CD8-positive, alpha-beta T cell (primary cell): ENCODE measurements at regions of chr17 and their contacts with region 1.

Region 1: GRCh38 chr17:40168262-40168832 is 8.9 kb upstream of the RAPGEFL1 start:
- DNase-seq: peak in 7 of 9 experiments; percentile 6 to 83 (median 47)
- ATAC-seq: peak; percentile 92
- H3K4me3 ChIP-seq: no peak overlapping the region
- H3K4me3 Mint-ChIP-seq: no peak overlapping the region
- H3K27ac ChIP-seq: no peak overlapping the region
- H3K27ac Mint-ChIP-seq: peak overlapping the region; percentile 80
- H3K4me1 ChIP-seq: peaks cover 4% of the 10 kb centered on the region
- H3K4me1 Mint-ChIP-seq: peaks cover 9% of the 10 kb centered on the region
- H3K27me3 ChIP-seq: no peaks in the 10 kb centered on the region
- H3K27me3 Mint-ChIP-seq: no peaks in the 10 kb centered on the region
- CTCF ChIP-seq: peak; percentile 79

Region 2: DNA sequence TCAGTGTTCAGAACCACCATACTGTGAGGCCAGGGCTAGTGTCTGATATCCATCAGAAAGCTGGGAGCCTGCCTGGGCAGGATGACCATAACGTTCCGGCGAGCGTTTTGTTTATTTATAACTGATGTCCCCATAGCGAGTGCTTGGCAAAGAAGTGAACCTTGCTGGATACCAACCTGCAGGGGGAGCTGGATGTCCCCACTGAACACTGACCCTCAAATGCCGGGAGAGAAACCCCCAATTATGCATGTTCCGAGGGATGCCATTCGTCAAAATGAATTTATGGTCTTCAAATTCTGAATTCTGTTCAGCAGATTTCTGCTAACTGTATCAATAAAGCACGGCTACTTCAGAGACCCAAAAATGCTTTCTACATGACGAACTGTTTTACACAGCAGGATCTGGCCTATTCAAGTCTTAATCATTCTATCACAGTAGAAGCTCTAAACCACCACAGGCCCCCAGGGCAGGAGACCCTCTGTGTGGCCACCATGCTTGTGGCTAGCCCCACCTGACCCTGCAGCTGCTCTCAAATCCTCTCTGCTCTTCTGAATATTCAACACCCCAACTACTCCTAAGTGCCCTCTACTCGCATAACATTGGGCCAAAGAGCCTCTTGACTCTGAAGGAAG is 129.3 kb before region 1 on chr17:
- CTCF ChIA-PET with region 1: interaction called, 5 read pairs
- POLR2A ChIA-PET with region 1: no interaction called
- intact Hi-C with region 1: loop called in 1 of 2 experiments (anchors 1 kb)
- DNase-seq: peak in 2 of 9 experiments; percentile 31 to 44
- ATAC-seq: no peak
- H3K4me3 ChIP-seq: no peak overlapping the region
- H3K4me3 Mint-ChIP-seq: no peak overlapping the region
- H3K27ac ChIP-seq: no peak overlapping the region
- H3K27ac Mint-ChIP-seq: no peak overlapping the region
- H3K4me1 ChIP-seq: no peaks in the 10 kb centered on the region
- H3K4me1 Mint-ChIP-seq: peaks cover 3% of the 10 kb centered on the region
- H3K27me3 ChIP-seq: no peaks in the 10 kb centered on the region
- H3K27me3 Mint-ChIP-seq: no peaks in the 10 kb centered on the region
- CTCF ChIP-seq: peak; percentile 30

Region 3: DNA sequence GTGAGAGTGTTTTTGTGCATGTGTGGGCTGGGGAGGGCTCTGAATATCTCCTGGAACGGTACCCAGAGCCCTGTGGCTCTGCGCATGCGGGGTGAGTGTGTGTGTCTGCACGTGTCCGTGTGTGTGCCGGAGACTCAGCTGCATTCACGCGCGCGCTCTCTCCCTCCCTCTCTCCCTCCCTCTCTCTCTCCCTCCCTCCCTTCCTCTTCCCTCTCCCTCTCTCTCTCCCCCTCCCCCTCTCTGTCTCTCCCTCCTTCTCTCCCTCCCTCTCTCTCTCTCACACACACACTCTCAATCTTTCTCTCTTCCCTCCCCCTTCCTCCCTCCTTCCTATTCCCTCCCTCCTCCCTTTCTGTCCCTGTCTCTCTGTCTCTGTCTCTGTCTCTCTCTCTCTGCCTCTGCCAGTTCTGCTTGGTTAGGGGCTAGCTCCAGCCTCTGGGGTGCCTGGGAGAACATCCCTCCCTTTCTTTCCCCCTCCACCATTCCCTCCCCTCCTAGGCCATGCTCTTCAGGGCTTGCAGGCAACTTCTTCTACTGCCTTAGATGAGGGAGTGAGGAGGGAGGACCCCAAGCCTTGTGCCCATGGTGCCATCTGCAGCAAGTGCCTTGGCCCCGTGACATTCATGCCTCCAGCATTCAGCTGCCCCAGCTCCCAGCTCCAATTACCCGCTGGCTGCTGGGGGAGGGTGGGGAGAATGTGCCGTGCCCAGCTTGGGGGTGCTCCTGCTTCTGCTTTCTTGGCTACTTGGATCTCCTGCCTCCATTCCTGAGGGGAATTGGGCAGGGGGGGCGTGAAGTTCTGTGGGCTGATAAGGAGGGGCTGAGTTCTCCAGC is 99.2 kb before region 1 on chr17:
- CTCF ChIA-PET with region 1: interaction called, 19 read pairs
- POLR2A ChIA-PET with region 1: interaction called, 4 read pairs
- intact Hi-C with region 1: loop called in 1 of 2 experiments (anchors 5 kb)
- DNase-seq: peak; percentile 55 to 89 (median 80)
- ATAC-seq: peak; percentile 63
- H3K4me3 ChIP-seq: peak overlapping the region; percentile 40 to 42
- H3K4me3 Mint-ChIP-seq: peak overlapping the region; percentile 84
- H3K27ac ChIP-seq: peak overlapping the region; percentile 18 to 75
- H3K27ac Mint-ChIP-seq: peak overlapping the region; percentile 96
- H3K4me1 ChIP-seq: peaks cover 89% of the 10 kb centered on the region
- H3K4me1 Mint-ChIP-seq: peaks cover 87% of the 10 kb centered on the region
- H3K27me3 ChIP-seq: no peaks in the 10 kb centered on the region
- H3K27me3 Mint-ChIP-seq: no peaks in the 10 kb centered on the region
- CTCF ChIP-seq: peak; percentile 41

Region 4: DNA sequence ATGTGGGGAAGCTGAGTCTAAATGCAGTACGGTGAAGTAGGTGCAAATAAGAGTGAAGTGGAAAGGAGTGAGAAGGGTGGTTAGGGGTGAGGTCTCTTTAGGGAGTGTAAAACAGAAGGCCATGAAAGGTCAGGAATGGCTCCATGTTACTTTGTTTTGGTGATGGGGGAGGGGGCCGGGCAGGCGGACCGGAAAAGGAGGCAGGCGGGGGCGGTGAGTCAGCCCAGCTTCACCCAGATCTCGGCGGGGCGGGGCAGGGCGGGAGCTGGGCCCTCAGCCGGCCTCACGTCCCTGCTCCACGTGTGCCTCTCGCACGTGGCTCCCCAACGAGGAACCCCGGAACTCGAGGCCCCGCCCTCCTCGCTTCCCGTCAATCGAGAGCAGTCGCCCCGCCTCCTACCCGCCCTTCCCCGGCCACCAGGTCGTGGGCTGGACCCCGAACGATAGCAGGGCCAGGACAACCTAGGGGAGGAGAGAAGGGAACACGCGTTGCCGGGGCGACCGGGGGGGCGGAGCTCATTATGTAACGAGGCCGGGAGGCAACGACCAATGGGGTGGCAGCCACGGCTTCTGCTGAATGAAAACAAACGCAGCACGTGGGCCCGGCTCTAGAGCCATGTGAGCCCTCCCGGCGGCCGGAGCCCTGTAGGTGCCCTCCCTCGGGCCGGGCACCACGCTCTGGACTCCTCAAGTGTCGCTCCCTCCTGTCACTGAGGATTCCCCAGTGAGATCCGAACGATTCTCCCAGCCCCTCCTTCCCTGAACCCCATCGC is 69.3 kb before region 1 on chr17:
- CTCF ChIA-PET with region 1: interaction called, 11 read pairs
- POLR2A ChIA-PET with region 1: interaction called, 5 read pairs
- intact Hi-C with region 1: no loop called
- DNase-seq: peak; percentile 97 to 100 (median 99)
- ATAC-seq: peak; percentile 64
- H3K4me3 ChIP-seq: peak overlapping the region; percentile 75 to 90
- H3K4me3 Mint-ChIP-seq: peak overlapping the region; percentile 94
- H3K27ac ChIP-seq: peak overlapping the region; percentile 79 to 98
- H3K27ac Mint-ChIP-seq: peak overlapping the region; percentile 95
- H3K4me1 ChIP-seq: peaks cover 80% of the 10 kb centered on the region
- H3K4me1 Mint-ChIP-seq: peaks cover 88% of the 10 kb centered on the region
- H3K27me3 ChIP-seq: no peaks in the 10 kb centered on the region
- H3K27me3 Mint-ChIP-seq: no peaks in the 10 kb centered on the region
- CTCF ChIP-seq: no peak

Region 5: DNA sequence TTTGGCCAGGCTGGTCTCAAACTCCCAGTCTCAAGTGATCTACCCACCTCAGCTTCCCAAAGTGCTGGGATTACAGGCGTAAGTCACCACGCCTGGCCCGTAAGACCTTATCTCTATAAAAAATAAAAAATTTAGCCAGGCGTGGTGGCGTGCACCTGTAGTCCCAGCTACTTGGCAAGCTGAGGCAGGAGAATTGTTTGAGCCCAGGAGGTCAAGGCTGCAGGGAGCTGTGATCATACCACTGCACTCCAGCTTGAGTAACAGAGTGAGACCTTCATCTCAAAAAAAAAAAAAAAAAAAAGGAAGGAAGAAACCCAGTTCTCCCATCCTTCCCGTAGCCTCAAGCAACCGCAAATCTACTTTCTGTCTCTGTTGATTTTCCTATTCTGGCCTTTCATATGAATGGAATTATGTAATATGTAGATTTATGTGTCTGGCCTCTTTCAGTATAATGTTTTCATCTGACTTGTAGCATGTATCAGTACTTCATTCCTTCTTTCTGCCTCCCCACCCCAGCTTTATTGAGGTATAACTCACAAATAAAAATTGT is 16.9 kb before region 1 on chr17:
- CTCF ChIA-PET with region 1: interaction called, 17 read pairs
- POLR2A ChIA-PET with region 1: interaction called, 3 read pairs
- intact Hi-C with region 1: no loop called
- DNase-seq: no peak
- ATAC-seq: no peak
- H3K4me3 ChIP-seq: no peak overlapping the region
- H3K4me3 Mint-ChIP-seq: no peak overlapping the region
- H3K27ac ChIP-seq: no peak overlapping the region
- H3K27ac Mint-ChIP-seq: no peak overlapping the region
- H3K4me1 ChIP-seq: peaks cover 14% of the 10 kb centered on the region
- H3K4me1 Mint-ChIP-seq: peaks cover 58% of the 10 kb centered on the region
- H3K27me3 ChIP-seq: no peaks in the 10 kb centered on the region
- H3K27me3 Mint-ChIP-seq: no peaks in the 10 kb centered on the region
- CTCF ChIP-seq: no peak

Region 6: GRCh38 chr17:40191237-40192208 is 23.2 kb after region 1 on chr17:
- CTCF ChIA-PET with region 1: interaction called, 17 read pairs
- POLR2A ChIA-PET with region 1: no interaction called
- intact Hi-C with region 1: no loop called
- DNase-seq: peak; percentile 36 to 80 (median 67)
- ATAC-seq: peak; percentile 73
- H3K4me3 ChIP-seq: peak overlapping the region; percentile 51 to 55
- H3K4me3 Mint-ChIP-seq: peak overlapping the region; percentile 95
- H3K27ac ChIP-seq: no peak overlapping the region
- H3K27ac Mint-ChIP-seq: peak overlapping the region; percentile 41
- H3K4me1 ChIP-seq: no peaks in the 10 kb centered on the region
- H3K4me1 Mint-ChIP-seq: peaks cover 9% of the 10 kb centered on the region
- H3K27me3 ChIP-seq: no peaks in the 10 kb centered on the region
- H3K27me3 Mint-ChIP-seq: no peaks in the 10 kb centered on the region
- CTCF ChIP-seq: peak; percentile 49

Region 7: GRCh38 chr17:40219073-40219860 is 50.9 kb after region 1 on chr17 and contains the start of gene WIPF2:
- CTCF ChIA-PET with region 1: no interaction called
- POLR2A ChIA-PET with region 1: no interaction called
- intact Hi-C with region 1: no loop called
- DNase-seq: peak; percentile 92 to 98 (median 96)
- ATAC-seq: peak; percentile 90
- H3K4me3 ChIP-seq: peak within 1 kb of the TSS; percentile 83 to 87
- H3K4me3 Mint-ChIP-seq: peak within 1 kb of the TSS; percentile 95
- H3K27ac ChIP-seq: peak within 1 kb of the TSS; percentile 99
- H3K27ac Mint-ChIP-seq: peak within 1 kb of the TSS; percentile 100
- H3K4me1 ChIP-seq: peaks cover 8% of the 10 kb centered on the region
- H3K4me1 Mint-ChIP-seq: peaks cover 30% of the 10 kb centered on the region
- H3K27me3 ChIP-seq: no peaks in the 10 kb centered on the region
- H3K27me3 Mint-ChIP-seq: no peaks in the 10 kb centered on the region
- CTCF ChIP-seq: peak; percentile 53
- total RNA-seq, gene WIPF2: 26.8 to 30.8 TPM

Region 8: DNA sequence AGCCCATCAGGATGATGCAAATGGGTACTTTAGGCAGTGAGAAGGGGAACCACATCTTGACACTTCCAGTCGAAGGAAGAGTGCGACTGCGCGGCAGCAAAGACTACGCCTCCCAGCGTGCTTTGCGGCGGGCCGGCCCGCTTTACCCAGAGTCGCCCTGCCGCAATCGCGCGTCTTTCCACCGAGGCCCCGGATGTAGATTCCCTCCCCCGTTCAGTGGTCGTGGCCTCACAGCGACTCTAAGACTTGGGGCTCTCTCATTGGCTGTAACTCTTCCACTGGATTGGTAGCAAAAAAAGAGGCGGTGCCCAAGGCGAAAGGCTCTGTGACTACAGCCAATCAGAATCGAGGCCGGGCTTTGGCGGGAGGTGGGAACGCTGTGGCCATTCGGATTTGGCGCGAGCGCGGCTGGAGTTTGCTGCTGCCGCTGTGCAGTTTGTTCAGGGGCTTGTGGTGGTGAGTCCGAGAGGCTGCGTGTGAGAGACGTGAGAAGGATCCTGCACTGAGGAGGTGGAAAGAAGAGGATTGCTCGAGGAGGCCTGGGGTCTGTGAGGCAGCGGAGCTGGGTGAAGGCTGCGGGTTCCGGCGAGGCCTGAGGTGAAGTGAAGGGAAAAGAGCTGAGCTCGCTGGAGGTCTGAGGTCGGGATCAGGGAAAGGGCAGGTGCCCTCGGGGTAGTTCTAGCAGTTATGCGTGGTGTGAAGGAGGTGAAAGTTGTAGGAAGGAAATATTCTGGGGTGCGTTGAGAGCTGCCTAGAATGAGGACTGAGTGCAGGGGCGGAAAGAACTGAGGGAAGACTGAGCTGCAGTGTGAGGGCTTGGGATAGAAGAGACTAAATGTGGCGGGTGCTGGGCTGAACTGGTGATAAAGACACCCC is 119.4 kb after region 1 on chr17 and contains the start of gene CDC6:
- CTCF ChIA-PET with region 1: no interaction called
- POLR2A ChIA-PET with region 1: no interaction called
- intact Hi-C with region 1: no loop called
- DNase-seq: peak; percentile 97 to 99 (median 98)
- ATAC-seq: peak; percentile 91
- H3K4me3 ChIP-seq: peak within 1 kb of the TSS; percentile 73 to 84
- H3K4me3 Mint-ChIP-seq: peak within 1 kb of the TSS; percentile 97
- H3K27ac ChIP-seq: peak within 1 kb of the TSS; percentile 21 to 36
- H3K27ac Mint-ChIP-seq: peak within 1 kb of the TSS; percentile 89
- H3K4me1 ChIP-seq: peaks cover 5% of the 10 kb centered on the region
- H3K4me1 Mint-ChIP-seq: peaks cover 22% of the 10 kb centered on the region
- H3K27me3 ChIP-seq: no peaks in the 10 kb centered on the region
- H3K27me3 Mint-ChIP-seq: no peaks in the 10 kb centered on the region
- CTCF ChIP-seq: no peak
- total RNA-seq, gene CDC6: 2.0 to 2.9 TPM

Region 9: GRCh38 chr17:40450175-40450574 is 281.8 kb after region 1 on chr17:
- CTCF ChIA-PET with region 1: no interaction called
- POLR2A ChIA-PET with region 1: no interaction called
- intact Hi-C with region 1: no loop called
- DNase-seq: peak in 7 of 9 experiments; percentile 19 to 58 (median 48)
- ATAC-seq: no peak
- H3K4me3 ChIP-seq: no peak overlapping the region
- H3K4me3 Mint-ChIP-seq: no peak overlapping the region
- H3K27ac ChIP-seq: no peak overlapping the region
- H3K27ac Mint-ChIP-seq: no peak overlapping the region
- H3K4me1 ChIP-seq: peaks cover 8% of the 10 kb centered on the region
- H3K4me1 Mint-ChIP-seq: peaks cover 16% of the 10 kb centered on the region
- H3K27me3 ChIP-seq: no peaks in the 10 kb centered on the region
- H3K27me3 Mint-ChIP-seq: peaks cover 3% of the 10 kb centered on the region
- CTCF ChIP-seq: peak; percentile 28